ENCODE measurements at regions of chr12 and their contacts with region 1.

Region 1: DNA sequence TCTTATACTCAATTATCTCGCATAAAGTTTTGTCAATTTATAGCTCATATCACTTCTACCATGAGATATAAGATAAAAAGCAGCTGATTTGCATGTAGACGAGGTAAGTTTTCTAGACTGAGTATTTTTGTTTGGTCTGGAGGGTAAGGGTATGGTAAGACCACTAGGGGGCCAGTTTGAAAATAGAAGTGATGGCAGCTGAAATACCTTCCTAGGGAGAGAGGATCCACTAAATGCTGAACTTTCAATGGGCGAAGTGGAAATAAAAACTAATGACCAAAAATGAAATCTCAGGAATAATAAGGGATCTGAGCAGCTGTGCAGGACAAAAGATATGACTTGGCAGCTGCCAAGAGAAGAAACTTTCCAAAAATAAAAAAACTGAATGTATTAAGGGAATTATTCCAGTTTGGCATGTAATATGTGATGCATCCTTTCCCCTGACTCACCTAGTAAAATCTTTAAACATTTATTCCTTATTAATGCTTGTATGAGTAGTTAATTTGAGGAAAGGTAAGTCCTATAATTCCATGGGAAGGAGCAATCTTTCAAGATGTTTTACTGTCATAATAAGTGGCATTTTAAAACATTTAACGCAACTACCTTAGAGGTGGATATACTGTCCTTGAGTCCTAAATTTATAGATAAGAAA is 754.5 kb downstream of the C12orf50 start:
- DNase-seq: peak; percentile 57
- H3K4me3 ChIP-seq: no peak overlapping the region
- H3K27ac ChIP-seq: no peak overlapping the region
- H3K4me1 ChIP-seq: no peaks in the 10 kb centered on the region
- H3K27me3 ChIP-seq: no peaks in the 10 kb centered on the region
- CTCF ChIP-seq: peak; percentile 71

Region 2: GRCh38 chr12:85662207-85662602 is 1612.5 kb before region 1 on chr12:
- CTCF ChIA-PET with region 1: no interaction called
- POLR2A ChIA-PET with region 1: no interaction called
- intact Hi-C with region 1: no loop called
- DNase-seq: no peak
- H3K4me3 ChIP-seq: no peak overlapping the region
- H3K27ac ChIP-seq: no peak overlapping the region
- H3K4me1 ChIP-seq: no peaks in the 10 kb centered on the region
- H3K27me3 ChIP-seq: no peaks in the 10 kb centered on the region
- CTCF ChIP-seq: no peak

Region 3: GRCh38 chr12:87667378-87667777 is 392.7 kb after region 1 on chr12:
- CTCF ChIA-PET with region 1: no interaction called
- POLR2A ChIA-PET with region 1: no interaction called
- intact Hi-C with region 1: loop called (anchors 5 kb)
- DNase-seq: peak; percentile 49
- H3K4me3 ChIP-seq: no peak overlapping the region
- H3K27ac ChIP-seq: no peak overlapping the region
- H3K4me1 ChIP-seq: no peaks in the 10 kb centered on the region
- H3K27me3 ChIP-seq: no peaks in the 10 kb centered on the region
- CTCF ChIP-seq: peak; percentile 56

Region 4: GRCh38 chr12:87801860-87802720 is 527.4 kb after region 1 on chr12:
- CTCF ChIA-PET with region 1: no interaction called
- POLR2A ChIA-PET with region 1: no interaction called
- intact Hi-C with region 1: no loop called
- DNase-seq: no peak
- H3K4me3 ChIP-seq: no peak overlapping the region
- H3K27ac ChIP-seq: no peak overlapping the region
- H3K4me1 ChIP-seq: no peaks in the 10 kb centered on the region
- H3K27me3 ChIP-seq: no peaks in the 10 kb centered on the region
- CTCF ChIP-seq: no peak

Region 5: DNA sequence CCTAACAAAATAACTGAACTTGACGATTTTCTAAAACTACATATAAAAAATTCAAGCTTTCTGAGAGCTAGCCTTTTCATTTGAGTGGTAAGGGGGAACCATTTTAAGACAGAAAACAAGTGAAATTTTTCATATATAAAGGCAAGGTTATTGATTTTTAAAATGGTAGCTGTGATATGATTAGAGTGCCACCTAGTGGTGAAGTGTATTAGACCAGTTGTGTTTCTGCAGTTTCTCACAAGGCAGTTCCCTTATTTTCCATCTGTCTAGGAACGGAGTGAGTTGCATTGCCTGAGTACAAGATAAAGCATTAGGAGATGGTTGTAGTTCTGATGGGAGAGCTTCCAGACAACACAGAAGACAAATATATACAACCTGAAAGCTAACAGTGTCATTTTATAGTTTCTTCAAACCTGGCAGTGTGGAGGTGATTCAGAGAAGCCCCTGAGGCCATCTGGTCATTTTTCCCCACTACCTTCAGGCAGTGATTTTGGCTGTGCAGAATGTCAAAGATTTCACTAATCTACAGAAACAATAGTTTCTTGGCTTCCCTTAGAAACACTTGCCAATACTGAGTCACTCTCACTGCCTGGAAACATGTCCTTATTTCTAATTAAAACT is 573.6 kb after region 1 on chr12:
- CTCF ChIA-PET with region 1: no interaction called
- POLR2A ChIA-PET with region 1: no interaction called
- intact Hi-C with region 1: loop called (anchors 5 kb)
- DNase-seq: peak; percentile 68
- H3K4me3 ChIP-seq: no peak overlapping the region
- H3K27ac ChIP-seq: no peak overlapping the region
- H3K4me1 ChIP-seq: no peaks in the 10 kb centered on the region
- H3K27me3 ChIP-seq: no peaks in the 10 kb centered on the region
- CTCF ChIP-seq: peak; percentile 87

Region 6: GRCh38 chr12:87995581-87996178 is 721.0 kb after region 1 on chr12:
- CTCF ChIA-PET with region 1: no interaction called
- POLR2A ChIA-PET with region 1: no interaction called
- intact Hi-C with region 1: loop called (anchors 5 kb)
- DNase-seq: peak; percentile 83
- H3K4me3 ChIP-seq: no peak overlapping the region
- H3K27ac ChIP-seq: no peak overlapping the region
- H3K4me1 ChIP-seq: no peaks in the 10 kb centered on the region
- H3K27me3 ChIP-seq: no peaks in the 10 kb centered on the region
- CTCF ChIP-seq: peak; percentile 87

Measured in A673 (cell line).